GM10248 (cell line): ENCODE measurements at regions of chr6 and their contacts with region 1.

Region 1: DNA sequence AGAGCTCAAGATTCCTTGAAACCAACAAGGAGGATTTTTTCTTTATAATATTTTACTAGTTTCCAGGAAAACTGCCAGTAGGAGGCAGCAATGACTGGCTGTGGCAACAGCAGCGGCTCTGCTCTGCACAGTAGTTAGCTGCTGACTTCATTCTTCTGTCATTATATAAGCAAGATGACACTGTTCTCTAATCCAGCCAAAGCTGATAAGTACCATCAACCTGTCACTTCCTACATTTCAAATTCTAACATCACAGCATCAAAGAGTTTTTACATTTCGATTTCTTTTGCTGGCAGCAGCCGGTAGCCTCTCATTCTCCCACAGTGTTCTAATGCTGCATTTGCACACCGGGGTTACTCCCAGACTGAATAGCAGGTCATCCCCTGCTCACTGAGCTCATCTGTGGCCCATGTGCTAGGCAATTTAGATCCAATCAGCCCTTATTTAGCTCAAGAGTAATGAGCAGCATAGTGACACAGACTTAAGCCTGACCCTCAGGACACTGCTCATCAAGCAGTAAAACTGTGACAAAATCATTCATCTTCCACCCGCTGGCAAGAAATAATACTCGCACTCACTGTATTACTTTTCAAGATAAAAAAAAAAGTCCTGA is 67.8 kb downstream of the MMS22L start:
- DNase-seq: no peak
- CTCF ChIP-seq: no peak

Region 2: GRCh38 chr6:96433950-96434349 is 781.3 kb before region 1 on chr6:
- CTCF ChIA-PET with region 1: no interaction called
- POLR2A ChIA-PET with region 1: no interaction called
- DNase-seq: no peak
- CTCF ChIP-seq: no peak

Region 3: GRCh38 chr6:97053643-97054411 is 161.4 kb before region 1 on chr6:
- CTCF ChIA-PET with region 1: no interaction called
- POLR2A ChIA-PET with region 1: no interaction called
- DNase-seq: no peak
- CTCF ChIP-seq: peak; percentile 39

Region 4: GRCh38 chr6:97203343-97203742 is 11.9 kb before region 1 on chr6:
- CTCF ChIA-PET with region 1: interaction called, 34 read pairs
- POLR2A ChIA-PET with region 1: interaction called, 3 read pairs
- DNase-seq: no peak
- CTCF ChIP-seq: no peak